Mammary epithelial cell (primary cell): ENCODE measurements at regions of chr6 and their contacts with region 1.

Region 1: GRCh38 chr6:154638369-154638768 is 94.8 kb upstream of the SCAF8 start:
- DNase-seq: peak; percentile 17
- H3K4me3 ChIP-seq: no peak overlapping the region
- H3K27ac ChIP-seq: no peak overlapping the region
- H3K4me1 ChIP-seq: no peaks in the 10 kb centered on the region
- H3K27me3 ChIP-seq: no peaks in the 10 kb centered on the region
- CTCF ChIP-seq: no peak

Region 2: GRCh38 chr6:154555073-154555677 is 83.2 kb before region 1 on chr6:
- CTCF ChIA-PET with region 1: no interaction called
- dilution Hi-C with region 1: loop called (anchors 5 kb)
- in situ Hi-C with region 1: no loop called
- intact Hi-C with region 1: no loop called
- DNase-seq: peak; percentile 91
- H3K4me3 ChIP-seq: no peak overlapping the region
- H3K27ac ChIP-seq: no peak overlapping the region
- H3K4me1 ChIP-seq: peaks cover 4% of the 10 kb centered on the region
- H3K27me3 ChIP-seq: no peaks in the 10 kb centered on the region
- CTCF ChIP-seq: no peak

Region 3: DNA sequence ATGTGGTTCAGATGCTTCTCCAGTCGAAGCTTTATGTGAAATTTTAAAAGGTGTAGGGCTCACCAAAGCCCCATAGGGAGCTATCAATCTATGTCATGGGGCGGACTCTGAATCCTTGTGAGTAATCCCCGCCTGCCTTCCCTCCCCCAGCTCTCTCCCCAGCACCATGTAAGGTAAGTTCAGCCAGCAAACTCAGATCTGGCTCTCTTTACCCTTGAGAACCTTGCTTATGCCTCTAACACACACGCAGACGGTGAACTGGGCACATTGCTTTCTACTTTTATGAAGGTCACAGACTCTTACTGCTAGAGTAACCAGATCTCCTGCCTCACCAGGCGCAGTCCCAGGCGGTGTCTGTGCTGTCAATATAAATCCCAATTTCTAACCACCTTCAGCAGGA is 45.2 kb before region 1 on chr6:
- CTCF ChIA-PET with region 1: no interaction called
- dilution Hi-C with region 1: loop called (anchors 5 kb)
- in situ Hi-C with region 1: no loop called
- intact Hi-C with region 1: no loop called
- DNase-seq: no peak
- H3K4me3 ChIP-seq: no peak overlapping the region
- H3K27ac ChIP-seq: no peak overlapping the region
- H3K4me1 ChIP-seq: no peaks in the 10 kb centered on the region
- H3K27me3 ChIP-seq: no peaks in the 10 kb centered on the region
- CTCF ChIP-seq: no peak